ENCODE measurements at regions of chr6 and their contacts with region 1.

Region 1: GRCh38 chr6:142946181-142946923 is 1.4 kb upstream of the HIVEP2 start:
- DNase-seq: peak; percentile 95
- ATAC-seq: peak; percentile 69
- H3K4me3 ChIP-seq: peak overlapping the region; percentile 74 to 80
- H3K27ac ChIP-seq: peak overlapping the region; percentile 69
- H3K4me1 ChIP-seq: peaks cover 20 to 32% of the 10 kb centered on the region in 2 experiments; a peak in 3 of 4 replicates
- H3K27me3 ChIP-seq: no peaks in the 10 kb centered on the region
- CTCF ChIP-seq: no peak
- POLR2A ChIP-seq: no peak
- RAD21 ChIP-seq: no peak

Region 2: GRCh38 chr6:142763205-142763604 is 183.1 kb before region 1 on chr6:
- CTCF ChIA-PET with region 1: no interaction called
- POLR2A ChIA-PET with region 1: no interaction called
- RAD21 ChIA-PET with region 1: no interaction called
- intact Hi-C with region 1: no loop called
- DNase-seq: no peak
- ATAC-seq: no peak
- H3K4me3 ChIP-seq: no peak overlapping the region
- H3K27ac ChIP-seq: no peak overlapping the region
- H3K4me1 ChIP-seq: no peaks in the 10 kb centered on the region
- H3K27me3 ChIP-seq: no peaks in the 10 kb centered on the region
- CTCF ChIP-seq: no peak
- POLR2A ChIP-seq: no peak
- RAD21 ChIP-seq: no peak

Region 3: DNA sequence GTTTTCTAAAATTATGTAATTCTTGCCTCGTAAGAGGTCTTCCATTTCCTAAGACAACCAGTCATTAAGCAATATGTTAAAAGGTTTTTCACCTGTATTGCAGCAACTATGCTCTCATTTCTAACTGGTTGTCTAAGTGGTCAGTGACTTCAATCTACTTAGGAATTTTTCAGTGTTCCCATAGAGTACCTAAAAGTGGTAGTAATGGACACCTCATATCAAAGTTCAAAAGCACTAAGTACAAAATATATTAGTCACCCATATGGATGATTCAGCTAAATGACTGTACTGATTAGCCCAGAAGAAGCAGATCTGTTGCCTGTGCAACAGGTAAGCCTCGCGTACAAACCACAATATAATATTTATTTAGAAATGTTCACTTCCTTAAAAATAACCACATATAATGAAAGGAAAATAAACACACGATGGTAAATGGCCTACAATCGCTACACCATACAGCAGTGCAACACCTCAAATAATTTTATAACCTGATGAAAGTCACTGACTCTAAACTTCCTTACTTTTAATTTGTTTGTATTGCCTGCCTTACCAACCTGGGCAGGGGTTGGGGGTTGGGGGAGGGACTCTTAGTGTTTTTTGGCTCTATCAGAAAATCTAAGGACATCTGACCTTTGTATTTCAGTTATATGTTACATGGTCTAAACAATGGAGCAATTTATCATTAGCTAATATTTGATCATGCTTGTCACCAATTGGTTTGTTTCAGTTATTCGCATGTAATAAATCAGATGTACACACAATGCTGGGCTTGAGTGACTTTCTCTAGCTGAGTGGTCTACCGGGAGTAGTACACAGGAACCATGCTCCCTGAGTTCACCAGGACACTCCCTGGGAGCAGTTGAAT is 107.3 kb before region 1 on chr6:
- CTCF ChIA-PET with region 1: no interaction called
- POLR2A ChIA-PET with region 1: no interaction called
- RAD21 ChIA-PET with region 1: no interaction called
- intact Hi-C with region 1: loop called (anchors 2 kb)
- DNase-seq: peak; percentile 86
- ATAC-seq: peak; percentile 94
- H3K4me3 ChIP-seq: peak overlapping the region in 1 of 2 experiments; percentile 23; a peak in 2 of 4 replicates
- H3K27ac ChIP-seq: peak overlapping the region; percentile 30; the same call in 1 of the 2 replicates
- H3K4me1 ChIP-seq: peaks cover 13 to 39% of the 10 kb centered on the region in 2 experiments
- H3K27me3 ChIP-seq: no peaks in the 10 kb centered on the region
- CTCF ChIP-seq: no peak
- POLR2A ChIP-seq: no peak
- RAD21 ChIP-seq: peak; percentile 4; the same call in 1 of the 2 replicates

Region 4: DNA sequence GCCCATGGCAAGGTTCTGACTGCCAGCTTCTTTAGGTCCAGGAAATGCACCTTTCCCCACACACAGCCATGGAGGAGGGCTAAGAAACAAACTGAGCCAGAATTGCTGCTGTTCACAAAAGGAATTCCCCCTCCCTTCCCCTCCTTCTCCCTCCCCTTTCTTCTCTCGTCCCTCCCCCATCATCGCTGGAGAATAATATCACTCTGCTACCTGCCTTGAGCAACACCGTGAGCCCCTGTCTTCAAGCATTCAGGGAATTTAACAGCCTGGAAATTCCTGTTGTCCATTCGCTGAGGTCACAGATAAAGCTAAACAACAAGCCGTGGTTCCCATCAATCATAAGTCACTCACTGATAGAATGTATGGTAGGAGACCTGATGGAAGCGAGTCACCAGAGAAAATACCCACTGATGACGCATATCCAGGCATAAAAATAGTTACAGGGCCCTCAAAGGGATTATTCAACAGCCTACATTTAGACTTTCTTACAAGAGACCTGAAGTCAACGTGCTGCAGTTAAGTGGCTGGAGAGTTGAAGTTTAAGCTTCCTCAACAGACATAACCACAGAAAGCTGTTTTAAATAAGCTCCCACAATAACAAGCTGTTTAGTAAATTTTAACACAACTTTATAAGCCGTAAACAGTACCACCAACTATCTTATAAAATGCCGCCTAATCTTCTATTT is 61.0 kb before region 1 on chr6:
- CTCF ChIA-PET with region 1: interaction called, 5 read pairs
- POLR2A ChIA-PET with region 1: no interaction called
- RAD21 ChIA-PET with region 1: no interaction called
- intact Hi-C with region 1: loop called (anchors 1 kb)
- DNase-seq: peak; percentile 94
- ATAC-seq: peak; percentile 91
- H3K4me3 ChIP-seq: peak overlapping the region; percentile 37 to 51
- H3K27ac ChIP-seq: peak overlapping the region; percentile 58
- H3K4me1 ChIP-seq: peaks cover 19 to 38% of the 10 kb centered on the region in 2 experiments
- H3K27me3 ChIP-seq: no peaks in the 10 kb centered on the region
- CTCF ChIP-seq: no peak
- POLR2A ChIP-seq: no peak
- RAD21 ChIP-seq: peak; percentile 46; the same call in 1 of the 2 replicates

Region 5: GRCh38 chr6:143060354-143060805 is 114.0 kb after region 1 on chr6:
- CTCF ChIA-PET with region 1: no interaction called
- POLR2A ChIA-PET with region 1: no interaction called
- RAD21 ChIA-PET with region 1: no interaction called
- intact Hi-C with region 1: loop called (anchors 2 kb)
- DNase-seq: peak; percentile 90
- ATAC-seq: peak; percentile 89
- H3K4me3 ChIP-seq: peak overlapping the region; percentile 56 to 71
- H3K27ac ChIP-seq: peak overlapping the region; percentile 80
- H3K4me1 ChIP-seq: peaks cover 8 to 38% of the 10 kb centered on the region in 2 experiments; a peak in 3 of 4 replicates
- H3K27me3 ChIP-seq: no peaks in the 10 kb centered on the region
- CTCF ChIP-seq: no peak
- POLR2A ChIP-seq: no peak
- RAD21 ChIP-seq: no peak

Region 6: GRCh38 chr6:143427109-143427817 is 480.9 kb after region 1 on chr6:
- CTCF ChIA-PET with region 1: no interaction called
- POLR2A ChIA-PET with region 1: no interaction called
- RAD21 ChIA-PET with region 1: no interaction called
- intact Hi-C with region 1: loop called (anchors 10 kb)
- DNase-seq: no peak
- ATAC-seq: peak; percentile 99
- H3K4me3 ChIP-seq: no peak overlapping the region
- H3K27ac ChIP-seq: no peak overlapping the region
- H3K4me1 ChIP-seq: no peaks in the 10 kb centered on the region
- H3K27me3 ChIP-seq: no peaks in the 10 kb centered on the region
- CTCF ChIP-seq: peak; percentile 71 to 98 (median 95)
- POLR2A ChIP-seq: no peak
- RAD21 ChIP-seq: peak; percentile 92

Measured in HCT116 (cell line).